B cell (primary cell): ENCODE measurements at regions of chr9 and their contacts with region 1.

Region 1: DNA sequence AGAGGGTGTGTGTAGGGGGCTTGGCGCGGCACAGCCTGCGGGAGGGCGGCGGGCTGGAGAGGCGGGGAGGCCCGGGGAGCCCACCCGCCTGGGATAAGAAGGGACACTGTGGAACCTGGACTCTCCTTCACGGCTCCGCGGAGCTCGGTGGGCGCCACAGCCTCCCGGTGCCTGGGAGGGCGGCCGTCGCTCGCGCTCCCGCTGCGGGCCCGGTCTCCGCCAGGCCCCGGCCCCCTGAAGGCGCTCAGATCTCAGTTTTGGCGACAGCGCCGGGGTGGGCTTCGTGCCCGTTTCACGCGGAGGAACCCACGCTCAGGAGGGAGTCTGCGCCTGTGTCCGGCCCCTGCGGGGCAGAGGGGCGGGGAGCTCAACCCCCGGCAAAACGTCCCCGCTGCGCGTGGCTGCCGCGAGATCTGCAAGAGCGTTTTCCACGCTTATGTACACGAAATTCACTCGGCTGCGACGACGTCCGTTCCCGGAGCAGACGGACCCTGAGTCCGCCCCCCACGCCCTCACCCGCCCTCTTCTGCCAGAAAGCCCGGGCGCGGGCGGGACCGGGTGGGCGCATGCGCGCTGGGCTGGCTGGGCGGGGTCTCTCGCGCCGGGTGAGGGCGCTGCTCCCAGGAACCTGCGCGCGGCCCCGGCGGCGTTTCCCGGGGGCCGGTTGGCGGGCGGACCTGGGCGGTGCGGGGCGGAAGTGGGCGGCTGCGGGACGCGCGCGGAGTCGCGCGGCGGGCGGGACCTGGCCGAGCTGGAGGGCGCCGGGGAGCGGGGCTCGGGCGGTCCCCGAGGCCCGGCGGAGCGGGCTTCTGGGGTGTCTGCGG is at the start of gene NELFB:
- DNase-seq: peak; percentile 94
- ATAC-seq: peak; percentile 88
- H3K4me3 ChIP-seq: peak within 1 kb of the TSS; percentile 44 to 95 (median 81)
- H3K4me3 Mint-ChIP-seq: peak within 1 kb of the TSS; percentile 89
- H3K27ac ChIP-seq: peak within 1 kb of the TSS; percentile 3 to 72
- H3K27ac Mint-ChIP-seq: peak within 1 kb of the TSS; percentile 89
- H3K4me1 ChIP-seq: peaks cover 17 to 27% of the 10 kb centered on the region in 2 donors
- H3K4me1 Mint-ChIP-seq: peaks cover 25% of the 10 kb centered on the region
- H3K27me3 ChIP-seq: no peaks in the 10 kb centered on the region
- H3K27me3 Mint-ChIP-seq: no peaks in the 10 kb centered on the region
- CTCF ChIP-seq: no peak
- total RNA-seq, gene NELFB: 55.8 and 56.9 TPM in 2 replicates

Region 2: DNA sequence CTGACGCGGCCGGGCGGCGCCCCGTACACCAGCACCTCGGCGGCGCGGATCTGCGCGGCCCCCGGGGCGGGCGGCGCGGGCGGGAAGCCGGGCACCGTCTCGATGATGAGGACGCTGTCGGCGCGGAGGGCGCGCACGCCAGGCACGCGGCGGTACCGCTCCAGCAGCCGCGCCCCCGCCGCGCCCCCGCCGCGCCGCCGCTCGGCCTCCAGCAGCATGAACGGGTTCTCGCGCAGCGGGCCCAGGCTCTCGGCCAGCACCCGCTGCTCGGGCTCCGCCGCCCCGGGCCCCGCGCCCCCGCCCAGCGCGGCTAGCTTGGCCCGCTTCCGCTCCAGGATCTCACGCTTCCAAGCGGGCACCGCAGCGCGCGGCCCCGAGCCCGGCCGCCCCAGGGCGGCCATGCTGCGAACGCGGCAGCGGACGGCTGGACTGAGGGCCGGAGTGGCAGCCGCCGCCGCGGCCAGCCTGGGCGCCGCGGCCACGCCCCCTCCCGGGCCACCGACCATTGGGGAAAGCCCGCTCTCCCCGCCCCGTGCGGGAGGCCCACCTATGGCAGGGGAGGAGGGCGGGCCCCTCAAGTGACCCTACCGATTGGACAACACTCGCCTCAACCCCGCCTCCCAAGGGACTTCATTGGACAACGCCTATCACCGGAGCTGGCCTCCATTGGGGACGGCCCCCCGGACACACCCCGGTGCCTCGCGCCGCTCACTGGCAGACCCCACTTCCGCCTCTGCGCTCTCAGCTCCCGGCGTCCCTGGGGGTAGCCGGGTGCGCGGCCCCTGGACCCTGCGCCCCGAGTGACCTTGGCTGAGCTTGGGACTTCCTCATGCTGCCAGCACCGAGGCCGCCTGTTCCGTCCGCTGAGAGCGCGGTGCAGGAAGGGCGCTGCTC is 54.3 kb before region 1 on chr9 and contains the start of gene TPRN:
- CTCF ChIA-PET with region 1: no interaction called
- POLR2A ChIA-PET with region 1: no interaction called
- intact Hi-C with region 1: loop called (anchors 1 kb)
- DNase-seq: peak; percentile 99
- ATAC-seq: peak; percentile 95
- H3K4me3 ChIP-seq: peak within 1 kb of the TSS; percentile 12 to 80 (median 75)
- H3K4me3 Mint-ChIP-seq: peak within 1 kb of the TSS; percentile 88
- H3K27ac ChIP-seq: peak within 1 kb of the TSS; percentile 78 to 89
- H3K27ac Mint-ChIP-seq: peak within 1 kb of the TSS; percentile 90
- H3K4me1 ChIP-seq: peaks cover 31 to 41% of the 10 kb centered on the region in 2 donors
- H3K4me1 Mint-ChIP-seq: peaks cover 29% of the 10 kb centered on the region
- H3K27me3 ChIP-seq: peaks cover 0 to 6% (median 0%) of the 10 kb centered on the region in 4 experiments
- H3K27me3 Mint-ChIP-seq: no peaks in the 10 kb centered on the region
- CTCF ChIP-seq: no peak
- total RNA-seq, gene TPRN: 16.3 and 19.3 TPM in 2 replicates

Region 3: DNA sequence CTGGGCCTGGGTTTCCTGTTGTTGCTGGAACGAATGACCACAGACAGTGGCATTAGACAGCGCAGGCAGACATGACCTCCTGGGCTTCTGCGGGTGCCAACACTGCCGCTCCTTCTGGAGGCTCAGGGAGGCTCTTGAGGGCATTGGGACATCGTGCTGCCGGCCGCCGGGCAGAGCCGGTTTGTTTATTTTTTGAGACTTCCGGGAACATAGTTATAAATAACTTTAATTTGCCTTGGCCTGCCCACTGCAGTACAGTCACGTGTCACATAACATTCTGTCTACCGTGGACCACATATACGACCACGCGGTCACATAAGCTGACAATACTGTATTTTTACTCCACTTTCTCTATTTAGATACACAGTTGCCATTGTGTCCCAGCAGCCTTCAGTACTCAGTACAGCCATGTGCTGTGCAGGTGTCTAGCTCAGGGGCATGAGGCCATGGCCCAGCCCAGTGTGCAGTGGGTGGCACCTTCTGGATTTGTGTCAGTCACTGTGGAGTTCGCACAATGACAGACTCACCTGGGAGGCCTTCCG is 14.5 kb after region 1 on chr9:
- CTCF ChIA-PET with region 1: interaction called, 3 read pairs
- POLR2A ChIA-PET with region 1: interaction called, 6 read pairs
- intact Hi-C with region 1: loop called (anchors 2 kb)
- DNase-seq: peak; percentile 56
- ATAC-seq: peak; percentile 37
- H3K4me3 ChIP-seq: peak overlapping the region in 4 of 5 experiments; percentile 33 to 50 (median 45)
- H3K4me3 Mint-ChIP-seq: peak overlapping the region; percentile 69
- H3K27ac ChIP-seq: peak overlapping the region; percentile 15 to 48
- H3K27ac Mint-ChIP-seq: peak overlapping the region; percentile 78
- H3K4me1 ChIP-seq: peaks cover 12 to 49% of the 10 kb centered on the region in 2 donors
- H3K4me1 Mint-ChIP-seq: peaks cover 30% of the 10 kb centered on the region
- H3K27me3 ChIP-seq: no peaks in the 10 kb centered on the region
- H3K27me3 Mint-ChIP-seq: no peaks in the 10 kb centered on the region
- CTCF ChIP-seq: no peak

Region 4: GRCh38 chr9:137277329-137278041 is 22.6 kb after region 1 on chr9 and contains the start of gene TOR4A:
- CTCF ChIA-PET with region 1: interaction called, 3 read pairs
- POLR2A ChIA-PET with region 1: interaction called, 4 read pairs
- intact Hi-C with region 1: loop called (anchors 1 kb)
- DNase-seq: peak; percentile 75
- ATAC-seq: peak; percentile 77
- H3K4me3 ChIP-seq: peak within 1 kb of the TSS; percentile 12 to 88 (median 82)
- H3K4me3 Mint-ChIP-seq: peak within 1 kb of the TSS; percentile 90
- H3K27ac ChIP-seq: peak within 1 kb of the TSS; percentile 76 to 79
- H3K27ac Mint-ChIP-seq: peak within 1 kb of the TSS; percentile 93
- H3K4me1 ChIP-seq: peaks cover 32 to 59% of the 10 kb centered on the region in 2 donors
- H3K4me1 Mint-ChIP-seq: peaks cover 44% of the 10 kb centered on the region
- H3K27me3 ChIP-seq: no peaks in the 10 kb centered on the region
- H3K27me3 Mint-ChIP-seq: no peaks in the 10 kb centered on the region
- CTCF ChIP-seq: no peak
- total RNA-seq, gene TOR4A: 12.7 and 15.3 TPM in 2 replicates